MCF 10A (cell line): ENCODE measurements at regions of chr4 and their contacts with region 1.

Region 1: DNA sequence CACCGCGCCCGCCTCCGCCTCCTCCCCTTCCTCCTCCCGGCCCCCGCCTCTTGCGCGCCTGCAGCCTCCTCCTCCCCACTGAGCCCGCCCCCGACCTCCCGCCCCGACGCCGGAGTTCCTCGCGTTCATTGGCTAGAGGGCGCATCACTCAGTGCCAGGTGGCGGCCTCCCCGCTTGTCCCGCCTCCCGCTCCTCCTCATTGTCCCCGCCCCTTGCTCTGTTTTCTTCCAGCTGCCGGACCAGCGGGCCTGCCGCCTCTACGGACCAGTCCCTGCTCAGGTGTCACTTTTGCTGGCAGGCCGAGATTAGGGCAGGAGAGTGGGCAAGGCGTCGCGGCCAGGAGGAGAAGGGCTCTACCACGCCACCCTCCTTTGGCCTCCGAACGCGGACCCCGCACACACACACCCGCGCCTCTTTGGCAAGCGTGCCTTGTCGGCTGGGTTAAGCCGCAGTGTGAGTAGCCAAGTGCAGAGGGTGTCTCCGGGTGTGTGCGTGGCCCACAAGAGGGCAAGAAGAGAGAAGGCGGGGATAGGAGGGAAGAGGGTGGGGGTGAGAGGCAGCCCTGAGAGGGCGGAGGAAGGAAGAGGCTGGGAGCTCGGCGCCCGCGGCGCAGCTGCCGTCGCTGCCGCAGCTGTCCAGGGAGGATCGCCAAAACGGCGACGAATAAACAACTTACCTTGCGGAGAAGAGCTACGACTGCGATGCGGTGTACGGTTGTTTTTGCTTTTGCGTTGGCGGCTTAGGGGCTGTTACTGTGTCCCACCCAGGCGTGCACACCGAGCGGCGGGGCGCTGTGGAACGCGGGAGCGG is 436 bp upstream of the PPP3CA start:
- DNase-seq: peak; percentile 97
- H3K4me3 Mint-ChIP-seq: peak overlapping the region; percentile 90
- H3K27ac Mint-ChIP-seq: peak overlapping the region; percentile 96
- H3K4me1 Mint-ChIP-seq: peaks cover 33% of the 10 kb centered on the region
- H3K27me3 Mint-ChIP-seq: no peaks in the 10 kb centered on the region
- CTCF ChIP-seq: no peak

Region 2: GRCh38 chr4:100742045-100742444 is 605.7 kb before region 1 on chr4:
- CTCF ChIA-PET with region 1: no interaction called
- POLR2A ChIA-PET with region 1: no interaction called
- intact Hi-C with region 1: loop called (anchors 5 kb)
- DNase-seq: peak; percentile 77
- H3K4me3 Mint-ChIP-seq: no peak overlapping the region
- H3K27ac Mint-ChIP-seq: no peak overlapping the region
- H3K4me1 Mint-ChIP-seq: peaks cover 22% of the 10 kb centered on the region
- H3K27me3 Mint-ChIP-seq: no peaks in the 10 kb centered on the region
- CTCF ChIP-seq: peak; percentile 53

Region 3: DNA sequence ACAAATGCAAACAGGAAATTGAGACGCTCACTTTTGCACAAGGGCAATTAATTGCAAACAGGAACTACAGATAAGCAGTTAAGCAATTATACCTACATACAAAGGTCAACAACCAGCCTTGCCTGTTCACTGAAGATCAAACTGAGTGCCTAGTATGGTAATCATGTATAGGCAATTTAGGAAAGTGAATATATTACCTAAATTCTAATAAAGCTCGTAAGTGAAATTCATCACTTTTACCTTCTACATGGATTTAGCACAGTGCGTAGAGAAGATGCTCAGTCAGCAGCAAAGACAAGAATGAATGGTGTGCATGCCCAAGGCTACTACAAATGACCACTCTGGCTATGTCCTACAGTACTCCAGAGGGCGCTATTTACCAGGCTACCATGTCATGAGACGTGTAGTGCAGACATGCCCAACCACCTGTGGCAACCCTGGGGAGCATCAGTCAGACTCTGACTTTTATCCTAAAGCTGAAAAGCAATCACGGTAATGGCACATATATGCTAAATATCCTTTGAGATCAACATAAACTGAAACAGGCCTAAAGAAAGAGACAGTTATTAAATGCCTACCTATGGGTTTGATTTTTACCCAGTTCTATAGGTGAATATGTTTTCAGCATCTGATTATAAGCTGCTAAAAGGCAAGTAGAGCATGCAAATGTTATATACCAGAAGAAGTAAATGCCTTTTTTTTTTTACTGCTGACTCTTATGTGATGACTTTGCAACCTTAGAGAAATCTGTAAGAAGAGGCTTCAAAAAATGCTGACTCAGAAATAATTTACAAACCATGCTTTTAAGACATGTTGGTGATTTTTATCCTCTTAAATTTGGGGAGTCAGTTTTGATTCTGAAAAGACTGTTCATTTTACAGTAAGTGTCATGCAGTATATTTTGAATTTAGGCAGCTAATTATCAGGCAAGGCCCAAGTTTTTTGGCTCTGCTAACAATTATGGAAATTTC is 178.4 kb before region 1 on chr4:
- CTCF ChIA-PET with region 1: interaction called, 4 read pairs
- POLR2A ChIA-PET with region 1: interaction called, 5 read pairs
- intact Hi-C with region 1: loop called (anchors 5 kb)
- DNase-seq: peak; percentile 85
- H3K4me3 Mint-ChIP-seq: no peak overlapping the region
- H3K27ac Mint-ChIP-seq: no peak overlapping the region
- H3K4me1 Mint-ChIP-seq: peaks cover 20% of the 10 kb centered on the region
- H3K27me3 Mint-ChIP-seq: no peaks in the 10 kb centered on the region
- CTCF ChIP-seq: peak; percentile 44

Region 4: GRCh38 chr4:101306225-101306624 is 41.5 kb before region 1 on chr4:
- CTCF ChIA-PET with region 1: interaction called, 5 read pairs
- POLR2A ChIA-PET with region 1: interaction called, 39 read pairs
- intact Hi-C with region 1: no loop called
- DNase-seq: peak; percentile 29
- H3K4me3 Mint-ChIP-seq: peak overlapping the region; percentile 68
- H3K27ac Mint-ChIP-seq: peak overlapping the region; percentile 94
- H3K4me1 Mint-ChIP-seq: peaks cover 19% of the 10 kb centered on the region
- H3K27me3 Mint-ChIP-seq: no peaks in the 10 kb centered on the region
- CTCF ChIP-seq: no peak

Region 5: DNA sequence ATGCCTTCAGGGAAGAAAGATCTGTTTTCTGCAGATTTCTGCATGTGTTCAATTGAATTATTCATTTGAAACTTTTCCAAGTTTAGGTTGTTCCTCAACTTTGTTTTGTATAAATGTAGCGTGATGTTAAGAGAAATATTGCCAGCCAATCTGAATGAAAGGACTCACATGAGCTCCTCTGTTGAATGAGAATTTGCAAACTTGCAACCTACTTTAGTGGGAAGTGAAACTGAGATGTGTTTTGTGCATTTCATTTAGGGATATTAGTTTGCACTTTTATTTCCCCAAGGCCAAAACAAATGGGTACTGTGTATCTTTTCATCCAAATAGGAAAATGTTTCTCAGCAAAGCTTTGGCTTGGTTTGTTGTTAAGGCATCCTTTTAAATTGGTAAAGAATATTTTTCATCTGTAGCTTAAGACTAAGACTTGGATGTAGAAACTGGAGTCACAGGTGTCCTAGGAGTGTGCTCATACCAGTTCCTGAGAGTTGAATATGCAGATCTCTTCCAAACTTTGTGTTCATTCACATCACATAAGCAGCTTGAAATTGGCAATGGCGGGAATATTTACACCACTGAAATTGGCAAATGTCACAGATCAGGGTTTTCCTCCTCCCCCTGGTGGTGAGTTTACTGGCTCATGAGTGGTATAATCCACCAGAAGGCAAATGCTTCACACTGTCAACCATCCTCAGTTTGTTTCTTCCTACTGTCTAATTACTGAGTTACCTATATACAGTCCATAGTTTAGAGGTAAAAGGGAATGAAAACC is 249.2 kb after region 1 on chr4:
- CTCF ChIA-PET with region 1: interaction called, 3 read pairs
- POLR2A ChIA-PET with region 1: interaction called, 9 read pairs
- intact Hi-C with region 1: loop called (anchors 5 kb)
- DNase-seq: peak; percentile 5
- H3K4me3 Mint-ChIP-seq: no peak overlapping the region
- H3K27ac Mint-ChIP-seq: no peak overlapping the region
- H3K4me1 Mint-ChIP-seq: peaks cover 5% of the 10 kb centered on the region
- H3K27me3 Mint-ChIP-seq: no peaks in the 10 kb centered on the region
- CTCF ChIP-seq: no peak

Region 6: DNA sequence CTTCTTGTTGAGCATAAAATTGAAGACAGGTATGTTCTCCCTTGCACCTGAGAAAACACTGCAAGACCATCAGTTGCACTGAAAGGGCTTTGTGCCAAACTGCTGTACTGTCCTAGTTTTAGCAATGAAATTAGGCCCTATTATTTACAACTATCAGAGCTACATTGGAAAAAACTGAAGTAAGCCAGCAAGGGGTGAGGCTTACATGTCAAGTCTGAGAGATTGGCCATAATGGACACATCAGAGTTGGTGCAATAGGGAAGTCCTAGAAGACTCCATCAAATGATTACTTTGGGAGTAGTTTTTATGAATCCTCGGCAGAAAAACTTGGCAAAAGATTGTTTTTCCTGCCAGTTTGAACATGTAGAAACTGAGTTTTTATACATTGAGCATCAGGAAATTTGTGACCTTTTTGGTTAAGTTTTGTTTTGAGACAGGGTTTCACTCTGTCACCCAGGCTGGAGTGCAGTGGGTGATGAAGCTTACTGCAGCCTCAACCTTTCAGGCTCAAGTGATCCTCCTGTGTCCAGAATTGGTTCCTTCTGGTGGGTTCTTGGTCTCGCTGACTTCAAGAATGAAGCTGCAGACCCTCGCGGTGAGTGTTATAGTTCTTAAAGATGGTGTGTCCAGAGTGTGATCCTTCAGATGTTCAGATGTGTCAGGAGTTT is 282.7 kb after region 1 on chr4:
- CTCF ChIA-PET with region 1: no interaction called
- POLR2A ChIA-PET with region 1: no interaction called
- intact Hi-C with region 1: no loop called
- DNase-seq: no peak
- H3K4me3 Mint-ChIP-seq: no peak overlapping the region
- H3K27ac Mint-ChIP-seq: no peak overlapping the region
- H3K4me1 Mint-ChIP-seq: no peaks in the 10 kb centered on the region
- H3K27me3 Mint-ChIP-seq: no peaks in the 10 kb centered on the region
- CTCF ChIP-seq: no peak

Region 7: DNA sequence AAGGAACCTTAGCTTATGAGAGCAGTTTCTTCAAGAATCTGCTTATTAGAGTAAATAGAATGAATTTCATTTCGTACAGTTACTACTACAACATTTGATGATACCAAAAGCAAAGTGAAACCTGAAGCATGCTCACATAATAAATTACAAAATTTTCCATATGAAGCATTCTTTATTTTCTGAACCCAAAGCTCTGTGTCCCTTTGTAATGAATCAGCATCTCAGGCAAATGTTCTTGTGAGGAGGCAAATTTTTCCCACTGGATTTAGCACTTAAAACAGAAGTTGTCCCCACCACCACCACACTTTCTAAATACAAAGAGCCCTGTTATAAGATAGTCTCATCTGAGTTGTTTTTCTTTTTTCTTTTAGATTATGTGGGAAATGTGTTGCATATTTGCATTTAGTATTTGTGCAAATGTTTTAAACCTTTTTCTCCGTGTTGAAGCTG is 1082.7 kb after region 1 on chr4:
- CTCF ChIA-PET with region 1: no interaction called
- POLR2A ChIA-PET with region 1: interaction called, 10 read pairs
- intact Hi-C with region 1: no loop called
- DNase-seq: peak; percentile 35
- H3K4me3 Mint-ChIP-seq: peak overlapping the region; percentile 81
- H3K27ac Mint-ChIP-seq: peak overlapping the region; percentile 73
- H3K4me1 Mint-ChIP-seq: peaks cover 11% of the 10 kb centered on the region
- H3K27me3 Mint-ChIP-seq: no peaks in the 10 kb centered on the region
- CTCF ChIP-seq: no peak